ENCODE measurements at regions of chr3 and their contacts with region 1.

Region 1: DNA sequence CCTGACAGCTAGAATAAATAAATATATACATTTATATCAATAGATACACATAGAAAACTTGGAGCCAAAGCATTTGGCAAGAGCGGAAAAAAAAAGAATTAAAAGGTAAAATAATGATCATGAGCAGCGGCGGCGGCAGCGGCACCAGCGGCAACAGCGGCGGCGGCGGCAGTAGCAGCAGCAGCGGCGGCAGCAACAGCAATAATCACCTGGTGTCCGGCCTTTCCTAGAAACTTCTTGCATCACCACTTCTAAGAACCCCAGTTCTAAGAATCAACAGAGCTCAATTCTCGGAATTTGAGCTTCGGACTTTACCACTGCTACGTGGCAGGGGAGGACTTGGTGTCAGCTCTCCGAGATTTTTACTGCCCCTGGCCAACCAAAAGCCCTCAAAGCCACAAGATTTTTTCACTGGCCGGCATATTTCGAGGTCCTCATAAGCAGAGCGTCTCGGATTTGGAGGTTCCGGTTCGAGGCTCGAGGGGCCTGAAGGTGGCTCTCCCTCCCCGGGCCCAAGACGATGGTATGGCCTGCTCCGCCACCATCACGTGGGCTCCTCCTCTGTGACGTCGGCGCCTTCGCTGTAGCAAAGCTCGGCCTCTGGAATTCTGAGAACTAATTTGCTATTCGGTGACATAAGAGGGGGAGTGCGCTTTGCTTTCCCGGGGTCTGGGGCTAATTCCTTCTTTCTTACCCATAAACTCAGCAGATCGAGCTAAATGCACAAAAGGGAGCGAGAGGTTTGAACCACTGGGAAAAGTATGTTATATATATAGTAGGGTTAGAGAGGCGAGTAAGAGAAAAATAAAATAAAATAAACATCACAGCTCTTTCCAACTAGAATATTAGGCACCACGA is at the start of gene BCL6:
- DNase-seq: peak; percentile 84
- ATAC-seq: peak; percentile 36
- H3K4me3 Mint-ChIP-seq: peak within 1 kb of the TSS; percentile 82
- H3K27ac Mint-ChIP-seq: peak within 1 kb of the TSS; percentile 100
- H3K4me1 Mint-ChIP-seq: peaks cover 61% of the 10 kb centered on the region
- H3K27me3 Mint-ChIP-seq: peaks cover 17% of the 10 kb centered on the region
- CTCF ChIP-seq: no peak
- total RNA-seq, gene BCL6: 10.2 to 11.8 TPM (median 11.2 TPM) in 3 replicates

Region 2: GRCh38 chr3:187662848-187663409 is 82.5 kb before region 1 on chr3:
- CTCF ChIA-PET with region 1: no interaction called
- POLR2A ChIA-PET with region 1: no interaction called
- DNase-seq: no peak
- ATAC-seq: no peak
- H3K4me3 Mint-ChIP-seq: no peak overlapping the region
- H3K27ac Mint-ChIP-seq: no peak overlapping the region
- H3K4me1 Mint-ChIP-seq: no peaks in the 10 kb centered on the region
- H3K27me3 Mint-ChIP-seq: peaks cover 14% of the 10 kb centered on the region
- CTCF ChIP-seq: no peak

Region 3: DNA sequence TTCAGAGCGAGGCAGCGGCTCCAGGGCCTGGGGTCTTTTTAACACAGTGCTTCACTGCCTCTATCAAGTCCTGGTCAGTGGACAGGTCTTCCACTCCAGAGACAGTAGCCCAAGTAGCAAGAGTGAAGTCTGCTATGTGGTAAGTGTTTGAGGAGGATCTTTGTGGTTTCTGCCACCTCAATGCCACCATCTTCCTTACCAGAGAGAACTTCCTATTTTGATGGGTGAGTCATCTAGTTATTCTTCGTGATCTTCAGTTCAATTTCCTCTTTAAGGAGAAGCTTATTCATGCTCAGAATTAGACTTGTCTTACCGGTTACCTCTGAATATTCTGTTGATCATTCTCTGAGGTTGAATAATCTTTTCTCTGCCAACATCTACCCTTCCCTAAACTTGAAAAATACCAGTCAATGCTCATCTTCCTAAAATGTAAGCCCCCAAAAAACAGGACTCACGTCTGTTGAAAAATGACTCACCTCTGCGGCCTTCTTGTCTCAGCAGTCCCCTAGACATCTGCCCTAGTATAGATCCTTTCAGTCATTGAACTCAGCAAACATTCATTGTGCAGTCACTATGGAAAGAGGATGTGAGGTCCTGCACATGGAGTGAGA is 32.0 kb after region 1 on chr3:
- CTCF ChIA-PET with region 1: no interaction called
- POLR2A ChIA-PET with region 1: no interaction called
- DNase-seq: no peak
- ATAC-seq: no peak
- H3K4me3 Mint-ChIP-seq: no peak overlapping the region
- H3K27ac Mint-ChIP-seq: no peak overlapping the region
- H3K4me1 Mint-ChIP-seq: peaks cover 20% of the 10 kb centered on the region
- H3K27me3 Mint-ChIP-seq: no peaks in the 10 kb centered on the region
- CTCF ChIP-seq: no peak

Region 4: GRCh38 chr3:187878776-187879518 is 133.5 kb after region 1 on chr3:
- CTCF ChIA-PET with region 1: no interaction called
- POLR2A ChIA-PET with region 1: no interaction called
- DNase-seq: no peak
- ATAC-seq: no peak
- H3K4me3 Mint-ChIP-seq: no peak overlapping the region
- H3K27ac Mint-ChIP-seq: no peak overlapping the region
- H3K4me1 Mint-ChIP-seq: no peaks in the 10 kb centered on the region
- H3K27me3 Mint-ChIP-seq: no peaks in the 10 kb centered on the region
- CTCF ChIP-seq: no peak

Region 5: DNA sequence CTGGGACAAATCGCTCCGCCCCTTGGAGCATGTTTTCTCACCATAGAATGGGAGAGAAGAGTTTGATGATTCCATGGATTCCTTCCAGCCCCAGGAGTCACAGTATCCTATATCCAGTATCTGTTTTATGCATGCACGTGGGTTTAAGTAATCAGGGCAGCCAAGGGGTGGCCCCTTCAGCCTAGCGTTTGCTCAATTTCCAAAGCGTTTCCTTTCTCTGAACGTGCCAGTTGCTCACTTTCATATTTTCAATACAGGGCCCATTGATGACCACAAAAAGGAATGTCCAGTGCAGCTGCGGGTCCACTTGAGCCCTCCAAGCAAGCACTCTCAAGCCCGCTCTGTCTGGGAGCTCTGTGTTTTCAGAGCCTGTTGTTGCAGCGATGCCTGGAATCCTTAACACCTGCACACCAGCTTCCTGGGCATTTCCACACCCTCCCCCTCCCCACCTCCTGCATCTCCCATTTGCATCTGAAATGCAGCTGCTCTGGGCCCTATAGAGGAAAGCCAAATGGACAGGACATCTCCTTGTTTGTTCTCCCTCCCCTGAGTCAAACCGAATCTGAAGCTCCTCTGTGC is 244.2 kb after region 1 on chr3:
- CTCF ChIA-PET with region 1: interaction called, 11 read pairs
- POLR2A ChIA-PET with region 1: interaction called, 17 read pairs
- DNase-seq: peak; percentile 75
- ATAC-seq: peak; percentile 97
- H3K4me3 Mint-ChIP-seq: peak overlapping the region; percentile 70
- H3K27ac Mint-ChIP-seq: peak overlapping the region; percentile 99
- H3K4me1 Mint-ChIP-seq: peaks cover 40% of the 10 kb centered on the region
- H3K27me3 Mint-ChIP-seq: no peaks in the 10 kb centered on the region
- CTCF ChIP-seq: no peak

Region 6: GRCh38 chr3:188052169-188053030 is 307.0 kb after region 1 on chr3:
- CTCF ChIA-PET with region 1: interaction called, 39 read pairs
- POLR2A ChIA-PET with region 1: interaction called, 11 read pairs
- DNase-seq: peak; percentile 63
- ATAC-seq: peak; percentile 85
- H3K4me3 Mint-ChIP-seq: no peak overlapping the region
- H3K27ac Mint-ChIP-seq: peak overlapping the region; percentile 72
- H3K4me1 Mint-ChIP-seq: peaks cover 20% of the 10 kb centered on the region
- H3K27me3 Mint-ChIP-seq: peaks cover 12% of the 10 kb centered on the region
- CTCF ChIP-seq: no peak

Region 7: GRCh38 chr3:188154014-188154808 is 408.8 kb after region 1 on chr3 and contains the start of gene LPP:
- CTCF ChIA-PET with region 1: interaction called, 38 read pairs
- POLR2A ChIA-PET with region 1: interaction called, 31 read pairs
- DNase-seq: peak; percentile 75
- ATAC-seq: peak; percentile 76
- H3K4me3 Mint-ChIP-seq: peak within 1 kb of the TSS; percentile 97
- H3K27ac Mint-ChIP-seq: peak within 1 kb of the TSS; percentile 99
- H3K4me1 Mint-ChIP-seq: peaks cover 56% of the 10 kb centered on the region
- H3K27me3 Mint-ChIP-seq: peaks cover 5% of the 10 kb centered on the region
- CTCF ChIP-seq: no peak
- total RNA-seq, gene LPP: 49.2 to 55.6 TPM (median 49.6 TPM) in 3 replicates

Measured in WTC11 (cell line).